Activated naive CD4-positive, alpha-beta T cell treated with anti-CD3 and anti-CD28 coated beads for 36 hours (primary cell): ENCODE measurements at regions of chr11 and their contacts with region 1.

Region 1: DNA sequence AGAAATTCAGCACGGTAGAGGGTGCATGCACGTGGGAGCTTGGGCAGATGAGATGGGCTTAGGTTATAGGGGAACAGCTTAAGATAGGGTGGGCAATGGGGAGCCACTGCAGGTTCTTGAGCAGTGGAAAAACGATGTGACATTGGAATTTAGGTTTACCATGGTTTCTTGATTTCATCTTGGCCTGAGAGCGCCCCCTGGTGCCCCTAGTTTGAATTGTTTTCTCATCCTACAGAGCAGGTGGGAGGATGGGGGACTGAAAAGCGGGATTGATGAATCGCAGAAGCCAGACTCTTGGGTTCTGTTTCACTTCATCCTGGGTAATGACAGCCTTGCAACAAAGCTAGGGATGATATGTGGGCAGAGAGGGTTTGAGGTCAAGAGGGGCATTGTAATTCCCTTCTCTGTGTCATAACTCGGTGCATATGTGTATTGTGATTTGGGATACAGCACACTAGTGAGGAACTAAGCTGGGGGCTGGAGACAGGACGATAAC is 6.7 kb upstream of the MCAM start:
- DNase-seq: peak; percentile 94
- H3K4me3 Mint-ChIP-seq: no peak overlapping the region
- H3K27ac Mint-ChIP-seq: no peak overlapping the region
- H3K4me1 Mint-ChIP-seq: peaks cover 18% of the 10 kb centered on the region
- H3K27me3 Mint-ChIP-seq: peaks cover 6% of the 10 kb centered on the region

Region 2: GRCh38 chr11:118997627-118998387 is 325.8 kb before region 1 on chr11 and contains the start of gene CENATAC:
- CTCF ChIA-PET with region 1: no interaction called
- intact Hi-C with region 1: loop called (anchors 1 kb)
- DNase-seq: peak; percentile 98
- H3K4me3 Mint-ChIP-seq: peak within 1 kb of the TSS; percentile 88
- H3K27ac Mint-ChIP-seq: peak within 1 kb of the TSS; percentile 96
- H3K4me1 Mint-ChIP-seq: peaks cover 33% of the 10 kb centered on the region
- H3K27me3 Mint-ChIP-seq: no peaks in the 10 kb centered on the region
- total RNA-seq, gene CENATAC: 17.4 to 18.0 TPM

Region 3: GRCh38 chr11:119067371-119068222 is 256.0 kb before region 1 on chr11 and contains the start of gene VPS11:
- CTCF ChIA-PET with region 1: interaction called, 10 read pairs
- intact Hi-C with region 1: loop called (anchors 1 kb)
- DNase-seq: peak; percentile 99
- H3K4me3 Mint-ChIP-seq: peak within 1 kb of the TSS; percentile 91
- H3K27ac Mint-ChIP-seq: peak within 1 kb of the TSS; percentile 96
- H3K4me1 Mint-ChIP-seq: peaks cover 37% of the 10 kb centered on the region
- H3K27me3 Mint-ChIP-seq: no peaks in the 10 kb centered on the region
- total RNA-seq, gene VPS11: 16.9 to 19.5 TPM

Region 4: GRCh38 chr11:119168471-119169281 is 154.9 kb before region 1 on chr11 and contains the start of gene NLRX1:
- CTCF ChIA-PET with region 1: interaction called, 20 read pairs
- intact Hi-C with region 1: loop called (anchors 1 kb)
- DNase-seq: peak; percentile 92
- H3K4me3 Mint-ChIP-seq: peak within 1 kb of the TSS; percentile 92
- H3K27ac Mint-ChIP-seq: peak within 1 kb of the TSS; percentile 82
- H3K4me1 Mint-ChIP-seq: peaks cover 6% of the 10 kb centered on the region
- H3K27me3 Mint-ChIP-seq: no peaks in the 10 kb centered on the region
- total RNA-seq, gene NLRX1: 20.8 to 22.2 TPM

Region 5: DNA sequence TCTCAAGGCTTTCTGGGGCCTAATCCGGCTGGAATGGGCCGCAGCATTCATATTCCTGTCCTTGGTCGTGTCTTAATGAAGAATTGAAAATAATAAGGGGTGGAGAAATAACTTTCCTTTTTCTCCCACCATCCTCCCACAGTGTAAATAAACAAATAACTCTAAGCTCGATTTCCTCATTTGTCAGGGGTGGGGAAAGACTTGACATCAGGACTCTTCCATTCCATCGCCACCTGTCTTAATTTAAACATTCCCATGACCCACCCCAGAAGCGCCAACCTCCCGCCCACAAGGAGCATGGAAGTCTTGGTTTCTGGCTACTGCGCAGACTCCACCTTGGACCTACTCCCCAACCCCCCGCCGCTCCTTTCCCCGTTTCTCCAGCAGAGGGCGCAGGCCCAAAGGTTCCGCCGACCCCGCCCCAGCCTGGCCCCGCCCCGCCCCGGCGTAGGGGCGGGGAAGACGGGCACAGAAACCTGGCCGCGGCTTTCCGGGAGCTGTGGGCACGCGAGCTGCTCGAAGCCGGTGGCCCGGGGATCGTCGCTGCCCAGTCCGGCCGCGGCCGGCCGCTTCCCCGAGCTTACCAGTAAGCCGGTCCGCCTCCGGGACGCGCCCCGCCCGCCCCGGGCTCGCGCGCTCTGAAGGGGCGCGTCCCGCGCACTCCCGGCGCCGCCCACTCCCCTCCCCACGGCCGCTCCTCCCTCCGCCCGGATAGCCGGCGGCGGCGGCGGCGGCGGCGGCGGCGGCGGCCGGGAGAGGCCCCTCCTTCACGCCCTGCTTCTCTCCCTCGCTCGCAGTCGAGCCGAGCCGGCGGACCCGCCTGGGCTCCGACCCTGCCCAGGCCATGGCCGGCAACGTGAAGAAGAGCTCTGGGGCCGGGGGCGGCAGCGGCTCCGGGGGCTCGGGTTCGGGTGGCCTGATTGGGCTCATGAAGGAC is 117.7 kb before region 1 on chr11 and contains the start of gene CBL:
- CTCF ChIA-PET with region 1: interaction called, 39 read pairs
- intact Hi-C with region 1: loop called (anchors 1 kb)
- DNase-seq: peak; percentile 99
- H3K4me3 Mint-ChIP-seq: peak within 1 kb of the TSS; percentile 93
- H3K27ac Mint-ChIP-seq: peak within 1 kb of the TSS; percentile 88
- H3K4me1 Mint-ChIP-seq: peaks cover 29% of the 10 kb centered on the region
- H3K27me3 Mint-ChIP-seq: no peaks in the 10 kb centered on the region
- total RNA-seq, gene CBL: 25.3 to 25.7 TPM

Region 6: DNA sequence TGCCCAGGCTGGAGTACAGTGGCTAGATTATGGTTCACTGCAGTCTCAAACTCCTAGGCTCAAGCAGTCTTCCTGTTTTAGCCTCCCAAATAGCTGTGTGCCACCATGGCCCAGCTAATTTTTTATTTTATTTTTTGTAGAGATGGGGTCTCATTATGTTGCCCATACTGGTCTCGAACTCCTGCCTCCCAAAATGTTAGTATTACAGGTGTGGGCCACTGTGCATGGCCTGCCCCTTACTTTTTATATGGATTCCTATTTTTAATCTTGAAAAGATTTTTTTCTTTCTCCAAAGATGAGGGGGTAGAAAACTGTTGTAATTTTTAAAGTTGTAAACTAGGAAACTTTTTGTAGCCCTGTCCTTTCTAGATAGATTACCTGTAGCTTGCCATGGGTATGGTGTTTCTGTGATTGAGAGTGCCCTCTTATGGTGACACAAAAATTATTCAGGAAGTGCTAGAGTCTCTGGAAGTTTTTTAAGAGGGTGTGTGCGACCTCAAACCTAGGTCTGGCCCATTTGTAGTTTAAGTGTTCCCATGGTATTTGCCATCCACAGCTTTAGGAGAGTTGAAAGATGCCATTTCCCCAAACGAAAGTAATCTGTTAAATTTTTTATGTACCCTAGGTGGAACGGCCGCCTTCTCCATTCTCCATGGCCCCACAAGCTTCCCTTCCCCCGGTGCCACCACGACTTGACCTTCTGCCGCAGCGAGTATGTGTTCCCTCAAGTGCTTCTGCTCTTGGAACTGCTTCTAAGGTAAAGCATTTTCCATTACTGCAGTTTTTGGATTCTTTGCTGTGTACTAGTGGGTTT is 39.0 kb before region 1 on chr11:
- CTCF ChIA-PET with region 1: interaction called, 21 read pairs
- intact Hi-C with region 1: loop called (anchors 2 kb)
- DNase-seq: peak; percentile 29
- H3K4me3 Mint-ChIP-seq: no peak overlapping the region
- H3K27ac Mint-ChIP-seq: no peak overlapping the region
- H3K4me1 Mint-ChIP-seq: peaks cover 16% of the 10 kb centered on the region
- H3K27me3 Mint-ChIP-seq: no peaks in the 10 kb centered on the region

Region 7: GRCh38 chr11:119334174-119334930 is 10.8 kb after region 1 on chr11 and contains the start of gene RNF26:
- CTCF ChIA-PET with region 1: interaction called, 70 read pairs
- intact Hi-C with region 1: loop called (anchors 2 kb)
- DNase-seq: peak; percentile 98
- H3K4me3 Mint-ChIP-seq: peak within 1 kb of the TSS; percentile 93
- H3K27ac Mint-ChIP-seq: peak within 1 kb of the TSS; percentile 91
- H3K4me1 Mint-ChIP-seq: peaks cover 31% of the 10 kb centered on the region
- H3K27me3 Mint-ChIP-seq: peaks cover 5% of the 10 kb centered on the region
- total RNA-seq, gene RNF26: 46.1 to 47.0 TPM

Region 8: DNA sequence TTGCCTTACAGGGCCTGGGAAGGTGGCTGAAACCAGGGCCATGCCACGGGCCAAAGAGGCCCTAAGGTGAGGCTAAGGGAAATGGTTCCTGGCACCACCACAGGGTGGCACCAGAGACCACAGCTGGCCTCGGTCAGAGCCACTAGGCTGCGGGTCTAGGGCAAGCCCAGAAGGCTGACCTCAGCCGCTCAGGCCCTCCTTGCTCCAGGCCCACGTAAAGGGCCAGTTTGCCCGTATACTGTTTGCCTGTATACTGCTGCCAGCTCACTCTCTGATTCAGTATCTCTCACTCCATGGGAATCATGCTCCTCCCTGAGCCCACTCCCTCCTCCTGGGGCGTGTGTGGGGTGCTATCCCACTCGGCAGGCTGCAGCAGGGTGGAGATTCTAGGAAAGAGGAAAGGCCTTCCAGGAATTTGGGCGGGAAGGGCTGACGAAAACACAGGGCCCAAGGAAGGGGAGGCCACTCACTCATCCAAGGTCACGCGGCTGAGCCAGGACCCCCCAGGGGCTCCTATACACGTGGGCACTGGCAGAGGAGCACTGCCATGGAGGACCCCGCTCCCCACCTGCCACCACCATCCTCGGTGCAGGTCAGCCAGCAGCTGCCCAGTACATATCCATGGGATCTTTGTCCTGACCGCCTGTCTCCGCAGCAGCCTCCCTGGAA is 343.0 kb after region 1 on chr11:
- CTCF ChIA-PET with region 1: no interaction called
- intact Hi-C with region 1: no loop called
- DNase-seq: peak; percentile 72
- H3K4me3 Mint-ChIP-seq: no peak overlapping the region
- H3K27ac Mint-ChIP-seq: no peak overlapping the region
- H3K4me1 Mint-ChIP-seq: no peaks in the 10 kb centered on the region
- H3K27me3 Mint-ChIP-seq: no peaks in the 10 kb centered on the region